ENCODE measurements at regions of chr19 and their contacts with region 1.

Region 1: DNA sequence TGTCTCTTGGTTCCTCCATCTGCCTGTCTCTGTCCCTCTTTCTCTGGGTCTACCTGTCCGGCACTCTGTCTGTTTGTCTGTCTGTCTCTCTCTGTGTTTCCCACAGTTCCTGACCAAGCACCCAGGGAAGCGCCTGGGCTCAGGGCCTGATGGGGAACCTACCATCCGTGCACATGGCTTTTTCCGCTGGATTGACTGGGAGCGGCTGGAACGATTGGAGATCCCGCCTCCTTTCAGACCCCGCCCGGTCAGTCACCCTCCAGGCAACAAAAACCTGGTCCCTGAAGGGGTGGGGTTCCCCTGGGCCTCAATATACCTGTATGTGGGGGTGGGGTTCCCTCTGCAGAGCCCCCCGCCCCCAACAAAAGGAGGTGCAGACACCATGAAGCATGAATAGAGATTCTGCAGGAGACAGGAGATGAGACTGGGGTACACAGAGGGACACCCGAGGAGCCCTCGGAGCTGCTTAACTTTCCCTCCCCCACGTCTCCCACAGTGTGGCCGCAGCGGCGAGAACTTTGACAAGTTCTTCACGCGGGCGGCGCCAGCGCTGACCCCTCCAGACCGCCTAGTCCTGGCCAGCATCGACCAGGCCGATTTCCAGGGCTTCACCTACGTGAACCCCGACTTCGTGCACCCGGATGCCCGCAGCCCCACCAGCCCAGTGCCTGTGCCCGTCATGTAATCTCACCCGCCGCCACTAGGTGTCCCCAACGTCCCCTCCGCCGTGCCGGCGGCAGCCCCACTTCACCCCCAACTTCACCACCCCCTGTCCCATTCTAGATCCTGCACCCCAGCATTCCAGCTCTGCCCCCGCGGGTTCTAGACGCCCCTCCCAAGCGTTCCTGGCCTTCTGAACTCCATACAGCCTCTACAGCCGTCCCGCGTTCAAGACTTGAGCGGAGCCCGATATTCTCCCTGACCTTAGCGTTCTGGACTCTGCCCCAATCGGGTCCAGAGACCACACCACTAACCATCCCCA is 2.6 kb upstream of the CACNG7 start:
- DNase-seq: peak; percentile 39
- ATAC-seq: peak; percentile 42
- H3K4me3 ChIP-seq: no peak overlapping the region
- H3K27ac ChIP-seq: no peak overlapping the region
- H3K4me1 ChIP-seq: peaks cover 17% of the 10 kb centered on the region
- H3K27me3 ChIP-seq: peaks cover 49% of the 10 kb centered on the region
- CTCF ChIP-seq: peak; percentile 96

Region 2: GRCh38 chr19:53849237-53849676 is 57.2 kb before region 1 on chr19:
- CTCF ChIA-PET with region 1: no interaction called
- POLR2A ChIA-PET with region 1: no interaction called
- intact Hi-C with region 1: no loop called
- DNase-seq: peak; percentile 49
- ATAC-seq: peak; percentile 58
- H3K4me3 ChIP-seq: no peak overlapping the region
- H3K27ac ChIP-seq: no peak overlapping the region
- H3K4me1 ChIP-seq: 0 out of 2 replicates have a peak, but pooled peaks cover 6% of the 10 kb centered on the region
- H3K27me3 ChIP-seq: no peaks in the 10 kb centered on the region
- CTCF ChIP-seq: no peak

Region 3: DNA sequence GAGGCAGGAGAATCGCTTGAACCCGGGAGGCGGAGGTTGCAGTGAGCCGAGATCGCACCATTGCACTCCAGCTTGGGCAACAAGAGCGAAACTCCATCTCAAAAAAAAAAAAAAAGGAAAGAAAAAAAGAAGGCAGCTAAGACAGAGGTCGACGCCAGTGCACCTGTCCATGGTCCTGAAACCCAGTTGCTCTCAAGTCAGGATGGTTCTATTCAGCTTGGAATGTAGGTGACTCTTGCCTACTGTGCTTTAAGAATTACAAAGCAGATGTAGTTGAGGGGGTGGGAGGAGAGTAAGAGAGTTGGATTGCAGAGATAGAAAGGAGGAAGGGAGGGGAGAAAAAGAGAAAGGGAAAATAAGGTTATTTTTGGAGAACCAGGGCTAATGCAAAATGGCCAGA is 21.2 kb after region 1 on chr19:
- CTCF ChIA-PET with region 1: no interaction called
- POLR2A ChIA-PET with region 1: no interaction called
- intact Hi-C with region 1: loop called (anchors 1 kb)
- DNase-seq: peak; percentile 78
- ATAC-seq: peak; percentile 54; the same call in 1 of the 2 replicates
- H3K4me3 ChIP-seq: no peak overlapping the region
- H3K27ac ChIP-seq: no peak overlapping the region
- H3K4me1 ChIP-seq: no peaks in the 10 kb centered on the region
- H3K27me3 ChIP-seq: peaks cover 8% of the 10 kb centered on the region
- CTCF ChIP-seq: no peak

Region 4: GRCh38 chr19:54023191-54023590 is 116.7 kb after region 1 on chr19:
- CTCF ChIA-PET with region 1: interaction called, 4 read pairs
- POLR2A ChIA-PET with region 1: no interaction called
- intact Hi-C with region 1: loop called (anchors 5 kb)
- DNase-seq: no peak
- ATAC-seq: no peak
- H3K4me3 ChIP-seq: no peak overlapping the region
- H3K27ac ChIP-seq: peak overlapping the region; percentile 80; the same call in 1 of the 2 replicates
- H3K4me1 ChIP-seq: peaks cover 42% of the 10 kb centered on the region
- H3K27me3 ChIP-seq: no peaks in the 10 kb centered on the region
- CTCF ChIP-seq: no peak

Region 5: GRCh38 chr19:54029930-54030490 is 123.5 kb after region 1 on chr19:
- CTCF ChIA-PET with region 1: interaction called, 13 read pairs
- POLR2A ChIA-PET with region 1: no interaction called
- intact Hi-C with region 1: no loop called
- DNase-seq: peak; percentile 94
- ATAC-seq: peak; percentile 79
- H3K4me3 ChIP-seq: no peak overlapping the region
- H3K27ac ChIP-seq: no peak overlapping the region
- H3K4me1 ChIP-seq: peaks cover 21% of the 10 kb centered on the region
- H3K27me3 ChIP-seq: no peaks in the 10 kb centered on the region
- CTCF ChIP-seq: peak; percentile 80

Measured in PC-3 (cell line).